Activated CD4-positive, alpha-beta memory T cell treated with anti-CD3 and anti-CD28 coated beads, Interleukin-2, amount 10 ng/mL, durations not matched to agents 7 days and 5 days (primary cell): ENCODE measurements at regions of chr5 and their contacts with region 1.

Region 1: DNA sequence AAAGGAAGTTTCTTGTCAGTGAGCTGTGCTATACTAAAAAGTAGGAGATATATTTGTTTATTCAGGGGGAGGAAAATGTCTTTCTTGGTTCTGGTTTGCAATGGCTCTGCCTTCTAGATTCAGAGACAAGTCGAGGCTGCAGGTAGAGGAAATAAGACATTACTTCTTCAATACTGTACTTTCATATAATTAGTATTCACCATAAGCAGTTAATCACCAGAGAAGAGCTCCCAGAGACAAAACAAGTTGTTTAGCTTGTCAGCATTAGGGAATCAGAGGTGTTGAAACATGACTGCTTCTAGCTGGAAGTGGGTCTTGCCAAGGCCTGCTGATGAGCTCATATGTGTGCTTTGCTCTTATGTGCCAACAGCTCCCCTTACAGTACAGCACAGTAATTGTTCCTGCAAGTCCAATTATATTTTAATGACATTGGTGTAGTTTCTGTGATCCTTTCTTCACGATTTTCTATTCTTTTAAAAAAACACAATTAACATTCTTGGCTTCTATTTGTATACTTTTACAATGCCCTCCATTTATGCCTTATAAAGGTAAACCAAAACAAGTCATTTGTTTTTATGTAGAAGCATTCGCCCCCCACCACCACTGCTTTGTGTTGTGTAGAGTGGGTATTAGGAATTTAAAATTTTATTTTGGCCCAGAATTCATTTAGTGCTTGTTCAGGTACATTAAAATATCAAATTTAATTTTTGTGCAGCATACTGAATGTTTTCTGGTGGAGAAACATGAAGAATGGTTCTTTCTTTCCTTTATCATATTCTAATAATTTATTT is 112.2 kb downstream of the RPS23 start:
- DNase-seq: peak; percentile 31
- H3K4me3 Mint-ChIP-seq: no peak overlapping the region
- H3K27ac Mint-ChIP-seq: no peak overlapping the region
- H3K4me1 Mint-ChIP-seq: no peaks in the 10 kb centered on the region
- H3K27me3 Mint-ChIP-seq: no peaks in the 10 kb centered on the region

Region 2: GRCh38 chr5:81425569-81425968 is 740.4 kb before region 1 on chr5:
- CTCF ChIA-PET with region 1: interaction called, 12 read pairs
- POLR2A ChIA-PET with region 1: no interaction called
- DNase-seq: no peak
- H3K4me3 Mint-ChIP-seq: no peak overlapping the region
- H3K27ac Mint-ChIP-seq: no peak overlapping the region
- H3K4me1 Mint-ChIP-seq: peaks cover 23% of the 10 kb centered on the region
- H3K27me3 Mint-ChIP-seq: no peaks in the 10 kb centered on the region